ENCODE measurements at regions of chr22 and their contacts with region 1.

Region 1: GRCh38 chr22:43633631-43634285 is 178.3 kb downstream of the EFCAB6 start:
- DNase-seq: no peak
- H3K4me3 ChIP-seq: no peak overlapping the region
- H3K27ac ChIP-seq: no peak overlapping the region
- H3K4me1 ChIP-seq: no peaks in the 10 kb centered on the region
- H3K27me3 ChIP-seq: no peaks in the 10 kb centered on the region
- CTCF ChIP-seq: no peak

Region 2: DNA sequence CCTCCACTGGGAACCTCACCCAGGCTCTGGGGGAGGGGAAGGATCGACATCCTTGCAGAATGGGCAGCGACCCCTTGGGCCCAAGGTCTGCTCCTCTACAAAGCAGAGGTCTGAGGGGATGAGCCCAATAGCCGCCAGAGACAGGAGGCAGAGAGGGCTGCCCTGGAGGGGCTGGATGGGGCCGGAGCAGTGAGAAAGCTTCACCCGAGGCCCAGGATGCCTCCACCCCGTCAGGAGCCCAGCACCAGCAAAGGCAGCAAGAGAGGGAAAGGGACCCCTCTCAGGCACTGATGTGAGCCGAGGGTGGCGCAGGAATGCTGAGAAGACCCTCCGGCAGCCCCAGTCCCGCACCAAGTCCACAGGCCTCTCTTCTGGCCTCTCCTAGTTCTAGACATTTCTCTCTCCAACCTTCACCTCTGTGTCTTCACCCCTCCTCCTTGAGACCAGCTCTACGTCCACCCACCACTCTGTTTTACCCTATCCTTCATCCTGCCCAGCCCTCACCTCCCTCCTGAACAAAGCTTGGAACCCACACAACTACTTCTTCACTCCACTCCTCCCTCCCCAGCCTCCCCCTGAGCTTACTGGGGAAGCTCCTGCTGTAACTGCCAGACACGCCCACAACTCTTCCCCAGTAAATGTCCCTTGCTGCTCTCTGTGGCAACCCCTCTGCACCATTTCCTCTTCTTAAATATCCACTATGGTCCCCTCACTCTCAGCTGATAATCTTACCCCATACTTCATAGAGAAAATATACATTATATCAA is 90.1 kb before region 1 on chr22:
- CTCF ChIA-PET with region 1: no interaction called
- dilution Hi-C with region 1: loop called (anchors 5 kb)
- in situ Hi-C with region 1: no loop called
- intact Hi-C with region 1: no loop called
- DNase-seq: no peak
- H3K4me3 ChIP-seq: no peak overlapping the region
- H3K27ac ChIP-seq: no peak overlapping the region
- H3K4me1 ChIP-seq: no peaks in the 10 kb centered on the region
- H3K27me3 ChIP-seq: no peaks in the 10 kb centered on the region
- CTCF ChIP-seq: no peak

Region 3: GRCh38 chr22:43681731-43682360 is 48.1 kb after region 1 on chr22:
- CTCF ChIA-PET with region 1: no interaction called
- dilution Hi-C with region 1: no loop called
- in situ Hi-C with region 1: no loop called
- intact Hi-C with region 1: no loop called
- DNase-seq: no peak
- H3K4me3 ChIP-seq: no peak overlapping the region
- H3K27ac ChIP-seq: no peak overlapping the region
- H3K4me1 ChIP-seq: peaks cover 7% of the 10 kb centered on the region
- H3K27me3 ChIP-seq: no peaks in the 10 kb centered on the region
- CTCF ChIP-seq: no peak

Region 4: GRCh38 chr22:43711681-43712080 is 77.9 kb after region 1 on chr22:
- CTCF ChIA-PET with region 1: no interaction called
- dilution Hi-C with region 1: loop called (anchors 5 kb)
- in situ Hi-C with region 1: no loop called
- intact Hi-C with region 1: no loop called
- DNase-seq: no peak
- H3K4me3 ChIP-seq: no peak overlapping the region
- H3K27ac ChIP-seq: no peak overlapping the region
- H3K4me1 ChIP-seq: no peaks in the 10 kb centered on the region
- H3K27me3 ChIP-seq: peaks cover 2% of the 10 kb centered on the region
- CTCF ChIP-seq: no peak

Measured in mammary epithelial cell (primary cell).